GM10248 (cell line): ENCODE measurements at regions of chr1 and their contacts with region 1.

Region 1: GRCh38 chr1:202852163-202852904 is 36.6 kb downstream of the RABIF start:
- DNase-seq: peak; percentile 66
- CTCF ChIP-seq: peak; percentile 79

Region 2: DNA sequence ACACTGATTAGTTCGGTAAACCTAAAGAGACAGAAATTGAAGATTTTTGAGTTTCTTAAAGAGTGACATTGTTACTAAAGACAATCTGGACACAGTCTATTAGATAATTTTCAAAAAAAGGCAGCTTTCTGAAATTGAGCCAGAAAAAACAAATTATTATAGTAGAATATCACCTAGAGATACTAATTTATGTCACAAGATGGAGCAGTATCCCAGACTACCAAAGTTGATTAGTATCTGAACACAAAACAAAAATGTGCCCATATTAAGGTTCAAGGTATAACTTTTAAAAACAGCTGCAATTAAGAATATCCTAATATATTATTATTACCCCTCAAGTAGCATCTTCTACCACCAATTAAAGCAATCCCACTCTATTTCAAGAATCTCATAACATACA is 101.6 kb before region 1 on chr1:
- CTCF ChIA-PET with region 1: interaction called, 13 read pairs
- POLR2A ChIA-PET with region 1: no interaction called
- DNase-seq: no peak
- CTCF ChIP-seq: no peak

Region 3: GRCh38 chr1:202791077-202791747 is 61.1 kb before region 1 on chr1:
- CTCF ChIA-PET with region 1: interaction called, 10 read pairs
- POLR2A ChIA-PET with region 1: no interaction called
- DNase-seq: no peak
- CTCF ChIP-seq: no peak

Region 4: GRCh38 chr1:202835548-202836090 is 16.7 kb before region 1 on chr1:
- CTCF ChIA-PET with region 1: interaction called, 17 read pairs
- POLR2A ChIA-PET with region 1: no interaction called
- DNase-seq: peak; percentile 55
- CTCF ChIP-seq: no peak

Region 5: GRCh38 chr1:202905331-202905730 is 53.0 kb after region 1 on chr1:
- CTCF ChIA-PET with region 1: no interaction called
- POLR2A ChIA-PET with region 1: no interaction called
- DNase-seq: no peak
- CTCF ChIP-seq: no peak

Region 6: DNA sequence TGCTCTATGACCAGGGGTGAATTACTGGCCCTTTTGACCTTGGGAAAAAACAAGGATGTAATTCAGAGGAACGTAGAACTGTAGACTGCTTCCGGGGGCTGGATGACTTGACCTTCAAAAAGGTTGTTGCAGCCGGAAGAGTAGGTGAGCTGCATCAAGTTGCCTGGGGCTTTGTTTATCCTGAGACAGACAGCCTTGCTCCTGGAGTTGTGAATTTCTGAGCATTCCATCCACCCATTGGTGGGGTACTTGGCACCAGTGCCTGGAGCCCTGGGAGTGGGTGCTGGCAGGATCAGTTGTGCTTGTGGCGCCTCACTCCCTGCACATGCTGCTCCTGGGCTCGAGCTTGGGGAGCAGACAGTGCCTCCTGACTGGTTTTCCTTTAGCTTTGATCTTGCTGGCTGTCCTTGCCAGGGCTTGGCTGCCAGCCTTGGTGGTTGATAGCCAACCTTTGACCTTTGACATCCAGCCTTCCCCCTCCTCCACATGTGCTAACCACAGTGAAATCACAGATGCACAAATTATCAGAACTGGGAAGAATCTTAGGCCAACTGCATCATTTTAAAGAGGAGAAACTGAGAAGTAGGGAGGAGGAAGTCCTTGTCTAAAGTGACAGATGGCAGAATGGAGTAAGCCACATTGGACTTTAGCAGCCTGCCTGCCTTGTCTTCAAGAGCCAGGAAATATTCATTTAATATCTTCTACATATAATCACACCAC is 249.7 kb after region 1 on chr1:
- CTCF ChIA-PET with region 1: no interaction called
- POLR2A ChIA-PET with region 1: no interaction called
- DNase-seq: no peak
- CTCF ChIP-seq: no peak